Sigmoid colon (tissue), 7 donors: ENCODE measurements at regions of chr11 and their contacts with region 1.

Region 1: DNA sequence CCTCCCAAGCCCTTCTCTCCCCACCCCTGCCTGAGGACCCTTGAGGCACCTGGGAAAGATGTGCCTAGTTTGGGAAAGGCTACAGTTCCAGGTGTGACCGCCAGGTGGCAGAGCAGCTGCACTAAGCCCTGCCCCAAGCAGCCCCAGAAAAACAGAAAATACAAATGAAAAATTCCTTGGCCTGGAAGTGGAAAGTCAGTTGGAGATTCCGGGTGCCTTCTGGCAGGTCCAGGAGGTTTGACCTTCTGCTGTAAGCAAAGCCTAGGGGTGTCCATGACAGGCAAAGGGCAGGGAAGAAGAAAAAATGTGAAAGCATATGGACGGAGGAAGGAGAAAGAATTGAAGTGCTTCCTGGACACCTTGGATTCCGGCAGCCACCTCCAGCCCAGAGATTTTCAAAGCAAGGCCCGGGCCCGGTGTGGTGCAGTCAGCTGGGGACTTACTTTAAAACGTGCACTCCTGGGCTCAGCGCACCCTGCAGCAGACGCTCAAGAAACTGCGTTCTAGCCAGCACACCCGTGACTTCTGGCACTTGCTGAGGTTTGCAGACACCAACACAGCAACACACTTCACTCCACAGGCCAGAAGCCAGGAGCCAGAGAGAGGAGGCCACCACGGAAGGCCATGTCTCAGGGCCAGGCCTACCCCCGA is 37.3 kb upstream of the SLC22A12 start:
- DNase-seq: peak; percentile 93
- H3K4me3 ChIP-seq: no peak overlapping the region
- H3K27ac ChIP-seq: peak overlapping the region; percentile 57 to 81 (median 68)
- H3K4me1 ChIP-seq: peaks cover 0 to 28% (median 20%) of the 10 kb centered on the region in 4 donors
- H3K27me3 ChIP-seq: no peaks in the 10 kb centered on the region
- CTCF ChIP-seq: peak; percentile 95 to 99 (median 98)
- EP300 ChIP-seq: no peak
- POLR2A ChIP-seq: no peak

Region 2: GRCh38 chr11:64386306-64386702 is 167.4 kb before region 1 on chr11:
- intact Hi-C with region 1: no loop called
- DNase-seq: no peak
- H3K4me3 ChIP-seq: no peak overlapping the region
- H3K27ac ChIP-seq: no peak overlapping the region
- H3K4me1 ChIP-seq: peaks cover 0 to 18% (median under 1%) of the 10 kb centered on the region in 4 donors
- H3K27me3 ChIP-seq: no peaks in the 10 kb centered on the region
- CTCF ChIP-seq: no peak
- EP300 ChIP-seq: no peak
- POLR2A ChIP-seq: no peak

Region 3: DNA sequence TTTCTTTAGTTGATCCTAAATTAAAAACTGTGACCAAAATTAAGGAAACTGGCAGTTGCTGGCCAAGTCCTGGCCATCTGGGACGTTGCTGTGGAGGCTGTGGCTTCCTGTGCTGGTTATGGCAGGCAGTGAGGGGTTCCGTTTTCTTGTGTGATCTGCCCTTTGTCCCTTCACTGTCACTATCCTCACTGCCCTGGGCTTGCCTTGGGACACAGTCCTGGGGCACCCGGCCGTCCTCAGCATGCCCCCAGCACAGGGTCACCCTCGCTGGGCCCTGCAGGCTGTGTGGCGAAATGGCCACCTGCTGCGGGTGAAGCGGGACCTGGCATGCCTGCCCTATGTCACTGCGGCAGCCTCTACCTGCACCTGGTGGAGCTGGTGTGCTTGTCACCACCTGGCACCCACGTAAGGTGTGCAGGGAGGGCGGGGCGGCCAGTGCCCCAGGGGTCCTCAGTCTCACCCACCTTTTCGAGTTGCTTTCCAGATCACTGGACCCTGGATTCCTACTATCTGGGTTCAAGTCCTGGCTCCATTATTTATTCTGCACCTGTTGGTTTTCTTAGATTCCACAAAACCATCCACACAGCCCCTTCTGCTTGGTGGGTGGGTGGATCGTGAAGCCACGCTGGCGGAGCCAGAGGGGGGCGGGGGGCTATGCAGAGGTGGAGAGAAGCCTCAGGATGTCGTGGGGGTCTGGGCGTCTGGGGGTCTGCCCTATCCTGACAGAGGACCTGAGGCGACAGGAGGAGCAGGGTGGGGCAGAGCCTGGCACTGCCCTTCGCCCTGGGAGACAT is 15.0 kb before region 1 on chr11:
- intact Hi-C with region 1: no loop called
- DNase-seq: no peak
- H3K4me3 ChIP-seq: no peak overlapping the region
- H3K27ac ChIP-seq: no peak overlapping the region
- H3K4me1 ChIP-seq: no peaks in the 10 kb centered on the region
- H3K27me3 ChIP-seq: no peaks in the 10 kb centered on the region
- CTCF ChIP-seq: no peak
- EP300 ChIP-seq: no peak
- POLR2A ChIP-seq: no peak

Region 4: DNA sequence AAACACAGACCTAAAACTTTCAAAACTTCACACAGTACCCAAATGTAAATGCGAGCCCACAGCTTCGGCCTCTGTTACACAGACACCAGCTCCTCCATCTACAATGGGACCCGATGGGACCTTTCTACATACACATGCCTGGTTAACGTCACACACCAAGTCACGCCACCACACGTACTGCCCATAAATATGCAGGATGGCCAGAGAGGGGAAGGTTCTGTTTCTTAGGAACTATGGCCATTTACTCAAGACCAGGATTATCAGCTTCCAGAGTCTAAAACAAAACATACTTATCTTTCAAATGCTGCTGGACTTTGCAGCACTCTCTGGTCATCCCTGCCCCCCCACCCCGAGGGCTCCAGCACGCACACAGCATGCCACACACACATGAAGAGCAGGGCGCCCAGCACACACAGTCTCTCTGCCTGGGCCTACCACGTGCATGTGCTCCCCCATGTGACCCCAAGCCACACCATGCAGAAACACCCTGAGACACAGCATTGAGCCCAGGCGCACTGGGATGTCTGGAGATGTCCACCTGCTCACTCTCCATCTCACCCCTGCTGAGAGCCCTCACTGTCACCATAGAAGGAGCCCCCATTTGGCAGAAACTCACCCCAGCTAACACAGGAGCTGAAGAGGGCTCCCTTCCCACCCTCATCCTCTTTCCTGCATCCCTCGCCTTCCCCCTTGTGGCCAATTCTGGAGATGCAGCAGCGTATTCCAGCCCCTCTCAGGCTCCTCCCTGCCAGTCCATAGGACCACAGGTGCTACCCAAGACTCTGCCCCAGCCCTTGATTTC is 99.1 kb after region 1 on chr11:
- intact Hi-C with region 1: loop called (anchors 1 kb)
- DNase-seq: peak; percentile 91
- H3K4me3 ChIP-seq: no peak overlapping the region
- H3K27ac ChIP-seq: peak overlapping the region in 3 of 4 donors; percentile 26 to 50 (median 48)
- H3K4me1 ChIP-seq: peaks cover 0 to 15% (median 6%) of the 10 kb centered on the region in 4 donors
- H3K27me3 ChIP-seq: no peaks in the 10 kb centered on the region
- CTCF ChIP-seq: peak; percentile 93 to 98 (median 96)
- EP300 ChIP-seq: no peak
- POLR2A ChIP-seq: no peak

Region 5: GRCh38 chr11:64723117-64723906 is 169.6 kb after region 1 on chr11 and contains the start of gene NRXN2:
- intact Hi-C with region 1: loop called (anchors 5 kb)
- DNase-seq: peak; percentile 91
- H3K4me3 ChIP-seq: peak within 1 kb of the TSS; percentile 55 to 70 (median 62)
- H3K27ac ChIP-seq: peak within 1 kb of the TSS; percentile 70 to 80 (median 74)
- H3K4me1 ChIP-seq: peaks cover 0 to 7% (median 3%) of the 10 kb centered on the region in 4 donors
- H3K27me3 ChIP-seq: peaks cover 3 to 45% (median 36%) of the 10 kb centered on the region in 3 donors
- CTCF ChIP-seq: peak; percentile 95 to 99 (median 96)
- EP300 ChIP-seq: no peak
- POLR2A ChIP-seq: no peak
- total RNA-seq, gene NRXN2: 6.8 to 20.5 (median 13.7) TPM